Naive thymus-derived CD8-positive, alpha-beta T cell (primary cell): ENCODE measurements at regions of chr1 and their contacts with region 1.

Region 1: DNA sequence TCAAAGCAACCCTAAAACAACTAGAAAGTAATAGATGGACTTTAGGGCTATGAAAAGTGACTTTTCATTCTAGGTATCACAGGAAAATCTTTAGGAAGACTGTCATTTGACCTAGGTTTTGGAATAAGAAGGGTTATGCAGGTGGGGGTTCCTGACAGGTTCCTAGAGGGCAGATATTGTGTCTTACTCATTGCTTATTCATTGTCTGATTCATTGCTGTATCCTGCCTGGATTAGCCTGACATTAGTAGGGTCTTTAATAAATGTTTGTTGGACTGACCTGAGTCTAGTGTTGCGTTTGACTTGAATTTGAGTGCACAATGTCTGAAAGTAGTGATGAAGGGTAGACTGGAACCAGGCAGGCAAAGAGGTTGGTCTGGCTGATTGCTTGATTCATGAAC is 6.0 kb downstream of the FNBP1L start:
- DNase-seq: no peak
- ATAC-seq: no peak
- H3K4me3 Mint-ChIP-seq: no peak overlapping the region
- H3K27ac Mint-ChIP-seq: no peak overlapping the region
- H3K4me1 Mint-ChIP-seq: peaks cover 1 to 7% (median 6%) of the 10 kb centered on the region in 4 donors
- H3K27me3 Mint-ChIP-seq: peaks cover 38 to 49% (median 47%) of the 10 kb centered on the region in 5 donors

Region 2: DNA sequence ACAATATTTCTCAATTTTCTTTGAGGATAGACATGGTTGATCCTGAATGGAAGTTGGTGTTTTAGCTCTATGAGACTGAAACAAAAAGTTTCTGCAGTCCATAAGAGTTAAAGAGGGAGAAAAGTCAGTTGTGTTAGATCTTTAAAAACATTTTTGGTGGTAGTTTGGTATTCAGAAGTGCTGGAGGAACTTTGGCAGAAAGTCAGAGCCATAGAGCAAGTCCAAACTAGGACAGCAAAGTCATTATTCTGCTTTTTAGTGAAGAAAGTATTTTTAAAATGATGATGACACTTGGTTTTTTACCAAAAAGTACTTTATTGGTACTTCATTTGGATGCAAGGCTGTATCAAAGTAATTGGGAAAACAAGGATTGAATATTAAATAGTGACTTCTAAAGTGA is 35.8 kb after region 1 on chr1:
- POLR2A ChIA-PET with region 1: interaction called, 11 read pairs
- DNase-seq: no peak
- ATAC-seq: no peak
- H3K4me3 Mint-ChIP-seq: no peak overlapping the region
- H3K27ac Mint-ChIP-seq: no peak overlapping the region
- H3K4me1 Mint-ChIP-seq: no peaks in the 10 kb centered on the region
- H3K27me3 Mint-ChIP-seq: peaks cover 0 to 8% (median 2%) of the 10 kb centered on the region in 5 donors